T-cell (primary cell): ENCODE measurements at regions of chr14 and their contacts with region 1.

Region 1: DNA sequence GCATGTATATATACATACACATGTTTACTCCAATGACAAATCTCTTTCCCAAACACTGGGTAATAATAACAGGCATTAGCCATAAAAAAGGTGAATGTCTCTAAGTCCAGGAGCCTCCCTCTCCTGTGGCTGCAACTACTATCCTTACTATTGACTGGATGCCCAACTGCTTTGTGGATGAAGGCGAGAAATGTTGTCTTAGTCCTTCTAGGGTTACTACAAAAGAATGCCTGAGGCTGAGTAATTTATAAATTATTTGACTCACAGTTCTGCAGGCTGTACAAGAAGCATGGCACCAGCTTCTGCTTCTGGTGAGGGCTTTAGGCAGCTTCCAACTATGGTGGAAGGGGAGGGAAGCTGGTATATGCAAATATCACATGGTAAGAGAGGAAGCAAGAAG is 366.0 kb upstream of the DDHD1 start:
- DNase-seq: no peak
- ATAC-seq: no peak
- H3K4me3 ChIP-seq: no peak overlapping the region
- H3K4me3 Mint-ChIP-seq: no peak overlapping the region
- H3K27ac ChIP-seq: no peak overlapping the region
- H3K27ac Mint-ChIP-seq: no peak overlapping the region
- H3K4me1 ChIP-seq: no peaks in the 10 kb centered on the region
- H3K4me1 Mint-ChIP-seq: no peaks in the 10 kb centered on the region
- H3K27me3 ChIP-seq: no peaks in the 10 kb centered on the region
- H3K27me3 Mint-ChIP-seq: no peaks in the 10 kb centered on the region

Region 2: GRCh38 chr14:52949711-52950409 is 569.3 kb before region 1 on chr14:
- CTCF ChIA-PET with region 1: no interaction called
- POLR2A ChIA-PET with region 1: interaction called in 1 of 2 experiments, 19 read pairs
- DNase-seq: peak in 4 of 35 experiments; percentile 0 to 24 (median 8)
- ATAC-seq: peak in 2 of 4 experiments; percentile 16 to 39
- H3K4me3 ChIP-seq: peak overlapping the region; percentile 53 to 95
- H3K4me3 Mint-ChIP-seq: peak overlapping the region; percentile 80 to 87 (median 80)
- H3K27ac ChIP-seq: no peak overlapping the region
- H3K27ac Mint-ChIP-seq: no peak overlapping the region
- H3K4me1 ChIP-seq: peaks cover 12 to 19% of the 10 kb centered on the region in 2 experiments
- H3K4me1 Mint-ChIP-seq: peaks cover 21 to 23% (median 22%) of the 10 kb centered on the region in 3 donors
- H3K27me3 ChIP-seq: peaks cover 23 to 43% of the 10 kb centered on the region in 2 experiments
- H3K27me3 Mint-ChIP-seq: peaks cover 40 to 54% of the 10 kb centered on the region in 2 donors

Region 3: GRCh38 chr14:53501361-53502211 is 17.6 kb before region 1 on chr14:
- CTCF ChIA-PET with region 1: no interaction called
- POLR2A ChIA-PET with region 1: no interaction called
- DNase-seq: no peak
- ATAC-seq: no peak
- H3K4me3 ChIP-seq: no peak overlapping the region
- H3K4me3 Mint-ChIP-seq: no peak overlapping the region
- H3K27ac ChIP-seq: no peak overlapping the region
- H3K27ac Mint-ChIP-seq: no peak overlapping the region
- H3K4me1 ChIP-seq: no peaks in the 10 kb centered on the region
- H3K4me1 Mint-ChIP-seq: no peaks in the 10 kb centered on the region
- H3K27me3 ChIP-seq: no peaks in the 10 kb centered on the region
- H3K27me3 Mint-ChIP-seq: peaks cover 0 to 4% of the 10 kb centered on the region in 2 donors

Region 4: GRCh38 chr14:54475187-54475899 is 956.2 kb after region 1 on chr14:
- CTCF ChIA-PET with region 1: no interaction called
- POLR2A ChIA-PET with region 1: no interaction called
- DNase-seq: no peak
- ATAC-seq: no peak
- H3K4me3 ChIP-seq: no peak overlapping the region
- H3K4me3 Mint-ChIP-seq: no peak overlapping the region
- H3K27ac ChIP-seq: no peak overlapping the region
- H3K27ac Mint-ChIP-seq: peak overlapping the region in 1 of 2 donors; percentile 5
- H3K4me1 ChIP-seq: no peaks in the 10 kb centered on the region
- H3K4me1 Mint-ChIP-seq: peaks cover 2 to 7% (median 5%) of the 10 kb centered on the region in 3 donors
- H3K27me3 ChIP-seq: no peaks in the 10 kb centered on the region
- H3K27me3 Mint-ChIP-seq: no peaks in the 10 kb centered on the region